ENCODE measurements at regions of chr15 and their contacts with region 1.

Region 1: DNA sequence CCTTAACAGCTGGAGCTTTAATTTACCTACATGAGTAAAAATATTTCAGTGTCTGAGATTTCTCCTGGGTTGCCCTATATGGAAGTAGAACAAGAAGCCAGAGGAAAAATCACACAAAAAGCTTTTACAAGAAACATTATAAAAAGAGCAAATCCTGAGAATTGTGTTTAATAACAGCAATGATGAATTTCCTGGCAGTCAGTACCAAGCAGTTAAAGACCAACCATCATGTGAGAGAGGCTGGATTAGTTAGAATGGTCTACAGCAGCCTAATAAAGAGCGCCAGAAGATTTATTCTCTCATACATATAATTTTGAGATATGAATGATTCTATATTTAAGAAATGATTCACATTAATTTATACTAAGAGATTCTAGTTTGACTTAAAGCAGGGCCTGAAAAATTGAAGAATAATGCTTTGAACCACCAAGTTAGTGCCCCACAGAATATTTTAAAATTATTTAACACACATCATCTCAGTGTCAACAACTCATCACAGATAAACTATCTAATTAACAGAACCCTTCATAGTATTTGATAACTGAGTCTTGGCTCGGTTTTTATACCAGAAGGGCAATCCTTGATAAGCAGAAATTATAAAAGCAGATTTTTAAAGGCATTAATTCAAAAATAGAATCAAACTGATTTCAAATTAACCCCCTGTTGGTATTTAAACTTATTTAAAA is 59.9 kb upstream of the DPH6 start:
- DNase-seq: no peak
- ATAC-seq: no peak
- H3K4me3 ChIP-seq: no peak overlapping the region
- H3K27ac ChIP-seq: no peak overlapping the region
- H3K4me1 ChIP-seq: no peaks in the 10 kb centered on the region
- H3K27me3 ChIP-seq: no peaks in the 10 kb centered on the region
- CTCF ChIP-seq: no peak

Region 2: GRCh38 chr15:35481992-35482391 is 123.9 kb before region 1 on chr15:
- CTCF ChIA-PET with region 1: no interaction called
- POLR2A ChIA-PET with region 1: no interaction called
- in situ Hi-C with region 1: no loop called
- intact Hi-C with region 1: no loop called
- DNase-seq: peak; percentile 13
- ATAC-seq: peak; percentile 94
- H3K4me3 ChIP-seq: no peak overlapping the region
- H3K27ac ChIP-seq: peak overlapping the region; percentile 29; the same call in 1 of the 2 replicates
- H3K4me1 ChIP-seq: no peaks in the 10 kb centered on the region; the same call in 1 of the 2 replicates
- H3K27me3 ChIP-seq: no peaks in the 10 kb centered on the region
- CTCF ChIP-seq: no peak

Region 3: DNA sequence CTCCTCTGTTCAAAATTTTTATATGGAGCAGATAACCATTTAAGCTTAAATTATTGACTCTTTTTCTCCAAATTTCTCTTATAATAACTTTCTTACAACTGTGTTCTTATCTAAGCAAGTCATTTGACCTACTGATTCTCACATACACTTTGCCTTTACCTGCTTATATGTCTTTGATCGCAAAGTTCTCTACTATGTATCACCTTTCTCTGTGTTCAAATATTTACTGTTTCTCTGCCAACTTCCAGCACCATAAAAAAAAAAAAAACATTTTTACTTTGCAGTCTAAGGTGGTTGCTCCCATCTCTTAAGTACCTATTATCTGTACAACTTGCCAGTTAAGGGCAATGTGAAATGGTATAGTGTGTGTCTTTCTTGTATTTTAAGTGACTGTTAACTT is 40.9 kb after region 1 on chr15:
- CTCF ChIA-PET with region 1: no interaction called
- POLR2A ChIA-PET with region 1: interaction called, 14 read pairs
- in situ Hi-C with region 1: no loop called
- intact Hi-C with region 1: no loop called
- DNase-seq: no peak
- ATAC-seq: no peak
- H3K4me3 ChIP-seq: no peak overlapping the region
- H3K27ac ChIP-seq: no peak overlapping the region
- H3K4me1 ChIP-seq: no peaks in the 10 kb centered on the region
- H3K27me3 ChIP-seq: no peaks in the 10 kb centered on the region
- CTCF ChIP-seq: no peak